SK-N-SH (cell line): ENCODE measurements at regions of chr6 and their contacts with region 1.

Region 1: GRCh38 chr6:30600451-30600961 is 16.5 kb downstream of the PPP1R10 start:
- DNase-seq: no peak
- H3K4me3 ChIP-seq: no peak overlapping the region
- H3K27ac ChIP-seq: 0 out of 4 replicates have a peak overlapping the region, but pooled peaks of 1 of the 2 experiments have one; percentile 13
- H3K4me1 ChIP-seq: no peaks in the 10 kb centered on the region
- H3K27me3 ChIP-seq: no peaks in the 10 kb centered on the region
- CTCF ChIP-seq: no peak
- EP300 ChIP-seq: no peak
- RAD21 ChIP-seq: no peak

Region 2: DNA sequence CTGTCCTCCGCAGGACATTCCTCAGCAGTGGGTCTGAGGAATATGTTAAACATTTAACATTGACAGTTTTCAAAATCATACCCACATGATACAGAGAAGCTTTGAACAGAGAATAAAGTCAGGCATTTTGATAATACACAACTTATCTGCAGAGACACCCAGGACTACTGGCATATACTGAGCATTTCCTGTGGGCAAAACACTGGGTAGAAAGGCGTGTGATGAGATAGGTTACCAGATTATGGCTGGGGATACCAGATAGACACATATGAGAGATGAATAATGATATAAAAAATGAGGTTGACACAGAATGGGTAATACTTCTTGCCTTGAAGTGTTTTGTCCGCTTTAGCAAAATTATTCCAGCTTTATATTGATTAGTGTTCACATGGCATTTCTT is 355.9 kb before region 1 on chr6:
- CTCF ChIA-PET with region 1: no interaction called
- POLR2A ChIA-PET with region 1: no interaction called
- DNase-seq: no peak
- H3K4me3 ChIP-seq: no peak overlapping the region
- H3K27ac ChIP-seq: no peak overlapping the region
- H3K4me1 ChIP-seq: no peaks in the 10 kb centered on the region
- H3K27me3 ChIP-seq: no peaks in the 10 kb centered on the region
- CTCF ChIP-seq: no peak
- EP300 ChIP-seq: no peak
- RAD21 ChIP-seq: no peak

Region 3: DNA sequence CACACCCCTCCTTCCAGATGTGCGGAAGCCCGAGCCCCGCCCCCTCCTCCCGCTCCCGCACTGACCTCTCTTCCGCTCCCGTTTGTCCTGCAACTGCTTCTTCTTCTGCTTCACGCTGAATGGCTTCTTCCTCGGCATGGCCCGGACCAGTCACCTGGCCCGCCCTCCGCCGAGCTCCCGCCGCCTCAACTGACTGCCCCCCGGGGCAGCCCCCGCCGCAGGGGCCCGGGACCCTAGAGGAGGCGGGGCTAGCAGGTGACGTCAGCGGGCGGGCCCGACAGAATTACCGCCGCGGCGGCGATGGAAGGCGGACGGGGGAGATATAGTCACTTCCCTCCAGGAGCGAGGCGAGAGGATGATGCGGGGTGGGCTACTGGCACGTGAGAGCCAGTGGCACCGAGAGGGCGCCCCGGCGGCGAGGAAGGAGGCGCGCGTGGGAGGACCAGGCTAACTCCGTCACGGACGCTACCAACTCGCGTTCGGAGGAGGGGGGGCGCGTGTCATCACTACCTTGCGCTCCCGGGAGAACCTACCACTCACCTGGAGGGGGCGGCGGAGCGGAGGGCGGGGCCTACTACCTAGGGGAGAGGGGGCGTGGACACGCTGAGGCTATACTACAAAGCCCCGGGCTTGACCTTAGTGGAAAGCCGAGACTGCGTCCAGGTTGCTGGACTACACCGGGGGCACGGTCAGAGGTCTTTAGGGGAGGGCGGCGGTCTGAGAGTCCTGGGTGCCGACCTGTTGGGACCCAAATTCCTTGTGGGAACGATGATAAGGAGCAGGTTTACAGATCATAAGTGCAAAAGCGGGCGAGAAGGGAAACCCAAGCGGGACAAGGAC is 44.2 kb before region 1 on chr6 and contains the start of gene GNL1:
- CTCF ChIA-PET with region 1: interaction called, 17 read pairs
- POLR2A ChIA-PET with region 1: interaction called, 3 read pairs
- DNase-seq: peak; percentile 92
- H3K4me3 ChIP-seq: peak within 1 kb of the TSS; percentile 93 to 99
- H3K27ac ChIP-seq: peak within 1 kb of the TSS; percentile 90 to 99
- H3K4me1 ChIP-seq: peaks cover 15 to 17% of the 10 kb centered on the region in 2 experiments
- H3K27me3 ChIP-seq: no peaks in the 10 kb centered on the region
- CTCF ChIP-seq: no peak
- EP300 ChIP-seq: no peak
- RAD21 ChIP-seq: no peak
- polyA plus RNA-seq, gene GNL1: 36.4 and 43.3 TPM in 2 replicates

Region 4: DNA sequence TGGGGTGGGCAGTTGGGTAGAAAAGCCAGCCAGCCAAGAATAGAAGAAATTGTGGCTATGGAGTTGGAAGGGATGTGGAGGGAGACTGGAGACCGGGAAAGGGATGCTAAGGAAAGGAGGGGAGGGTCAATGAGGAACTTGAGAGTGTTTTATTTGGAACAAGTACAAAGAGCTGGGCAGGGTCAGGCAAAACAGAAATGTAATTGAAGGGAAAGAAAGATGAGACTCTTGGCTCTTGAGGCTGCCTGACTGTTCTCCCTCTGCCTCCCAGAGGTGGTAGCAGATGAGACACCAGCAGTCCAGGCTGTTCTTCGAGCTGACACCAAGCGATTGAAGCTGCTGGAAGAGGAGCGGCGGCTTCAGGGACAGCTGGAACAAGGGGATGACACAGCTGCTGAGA is 16.6 kb before region 1 on chr6:
- CTCF ChIA-PET with region 1: interaction called, 29 read pairs
- POLR2A ChIA-PET with region 1: interaction called, 5 read pairs
- DNase-seq: no peak
- H3K4me3 ChIP-seq: no peak overlapping the region
- H3K27ac ChIP-seq: no peak overlapping the region
- H3K4me1 ChIP-seq: no peaks in the 10 kb centered on the region
- H3K27me3 ChIP-seq: no peaks in the 10 kb centered on the region
- CTCF ChIP-seq: no peak
- EP300 ChIP-seq: no peak
- RAD21 ChIP-seq: no peak

Region 5: DNA sequence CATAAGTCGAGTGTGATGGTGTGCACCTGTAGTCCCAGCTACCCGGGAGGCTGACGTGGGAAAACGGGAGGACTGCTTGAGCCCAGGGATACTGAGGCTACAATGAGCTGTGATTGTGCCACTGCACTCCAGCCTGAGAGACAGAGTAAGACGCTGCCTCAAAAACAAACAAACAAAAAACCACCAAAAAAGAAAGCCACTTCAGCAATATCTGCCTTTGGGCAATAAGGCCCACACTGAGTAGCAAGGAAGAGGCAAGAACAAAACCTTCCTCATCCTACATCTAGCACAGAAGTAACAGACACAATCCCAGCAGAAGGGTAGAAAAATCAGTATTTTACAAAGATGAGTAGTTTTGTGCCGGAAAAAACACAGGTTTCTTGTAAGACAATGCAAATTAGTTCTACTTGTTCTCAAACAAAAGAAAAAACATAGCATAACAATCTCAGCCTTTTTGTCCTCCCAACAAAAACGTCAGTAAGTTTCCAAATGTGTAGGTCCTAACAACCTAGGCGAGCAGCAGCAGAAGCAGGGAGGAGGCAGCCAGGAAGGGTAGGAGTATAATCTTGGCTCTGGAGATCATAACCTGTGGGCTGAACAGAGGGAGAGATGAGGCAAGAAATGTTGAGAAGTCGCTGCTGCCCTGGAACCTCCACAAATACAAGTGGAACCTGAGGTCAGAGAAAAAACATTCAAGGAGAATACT is 10.8 kb after region 1 on chr6:
- CTCF ChIA-PET with region 1: interaction called, 38 read pairs
- POLR2A ChIA-PET with region 1: interaction called, 32 read pairs
- DNase-seq: no peak
- H3K4me3 ChIP-seq: no peak overlapping the region
- H3K27ac ChIP-seq: no peak overlapping the region
- H3K4me1 ChIP-seq: peaks cover 22 to 23% of the 10 kb centered on the region in 2 experiments
- H3K27me3 ChIP-seq: no peaks in the 10 kb centered on the region
- CTCF ChIP-seq: no peak
- EP300 ChIP-seq: no peak
- RAD21 ChIP-seq: no peak

Region 6: DNA sequence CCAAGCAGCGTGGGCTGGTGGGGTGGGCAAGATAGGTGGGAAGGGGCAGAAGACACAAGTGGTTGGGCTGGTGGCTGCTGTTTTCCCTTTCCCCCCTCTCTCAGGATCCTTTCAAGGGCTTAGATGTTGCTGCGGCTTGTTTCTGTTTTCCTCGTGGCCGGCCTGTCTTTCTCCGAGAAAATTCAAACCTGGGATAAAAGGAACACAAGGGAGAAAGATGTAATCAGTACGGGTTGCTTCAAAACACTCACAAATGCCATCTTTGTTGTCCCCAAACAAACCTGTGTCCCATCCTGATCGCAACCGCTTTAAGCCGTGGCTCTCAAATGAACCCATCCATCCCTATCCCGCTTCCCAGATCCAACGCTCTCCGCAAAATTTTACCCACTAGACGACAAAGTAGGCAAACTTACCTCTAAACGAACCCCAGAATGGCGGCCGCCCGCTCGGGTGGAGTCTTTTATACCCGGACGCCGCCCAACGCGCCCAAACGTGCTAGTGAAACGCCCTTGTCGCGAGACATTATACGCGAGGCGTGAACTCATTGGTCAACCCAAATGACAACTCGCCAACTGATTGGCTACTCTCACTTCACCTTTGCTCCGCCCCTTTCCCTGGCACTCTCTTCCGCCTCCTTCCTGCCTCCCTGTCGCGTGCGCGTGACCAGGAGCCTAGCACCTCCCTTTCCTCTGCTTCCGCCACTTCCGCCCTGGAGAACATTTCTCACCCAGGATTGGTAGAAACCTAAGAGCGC is 16.5 kb after region 1 on chr6 and contains the start of gene PPP1R10:
- CTCF ChIA-PET with region 1: interaction called, 33 read pairs
- POLR2A ChIA-PET with region 1: interaction called, 32 read pairs
- DNase-seq: peak; percentile 82
- H3K4me3 ChIP-seq: peak within 1 kb of the TSS; percentile 78 to 94
- H3K27ac ChIP-seq: peak within 1 kb of the TSS; percentile 96 to 98
- H3K4me1 ChIP-seq: peaks cover 21 to 32% of the 10 kb centered on the region in 2 experiments
- H3K27me3 ChIP-seq: no peaks in the 10 kb centered on the region
- CTCF ChIP-seq: no peak
- EP300 ChIP-seq: no peak
- RAD21 ChIP-seq: no peak
- polyA plus RNA-seq, gene PPP1R10: 16.8 and 22.1 TPM in 2 replicates

Region 7: GRCh38 chr6:30678964-30679726 is 78.6 kb after region 1 on chr6:
- CTCF ChIA-PET with region 1: no interaction called
- POLR2A ChIA-PET with region 1: no interaction called
- DNase-seq: peak; percentile 90
- H3K4me3 ChIP-seq: peak overlapping the region in 1 of 2 experiments; percentile 32; a peak in 1 of 4 replicates
- H3K27ac ChIP-seq: peak overlapping the region in 1 of 2 experiments; percentile 16; a peak in 2 of 4 replicates
- H3K4me1 ChIP-seq: peaks cover 16 to 38% of the 10 kb centered on the region in 2 experiments; a peak in 3 of 4 replicates
- H3K27me3 ChIP-seq: no peaks in the 10 kb centered on the region
- CTCF ChIP-seq: peak; percentile 92
- EP300 ChIP-seq: no peak
- RAD21 ChIP-seq: peak; percentile 88

Region 8: GRCh38 chr6:31739639-31740396 is 1139.3 kb after region 1 on chr6 and contains the start of gene MSH5:
- CTCF ChIA-PET with region 1: no interaction called
- POLR2A ChIA-PET with region 1: no interaction called
- DNase-seq: peak; percentile 95
- H3K4me3 ChIP-seq: peak within 1 kb of the TSS; percentile 77 to 83
- H3K27ac ChIP-seq: peak within 1 kb of the TSS; percentile 75 to 88
- H3K4me1 ChIP-seq: peaks cover 15 to 24% of the 10 kb centered on the region in 2 experiments; a peak in 3 of 4 replicates
- H3K27me3 ChIP-seq: no peaks in the 10 kb centered on the region
- CTCF ChIP-seq: no peak
- EP300 ChIP-seq: no peak
- RAD21 ChIP-seq: no peak
- polyA plus RNA-seq, gene MSH5: 16.0 and 19.5 TPM in 2 replicates